ENCODE measurements at regions of chr6 and their contacts with region 1.

Region 1: DNA sequence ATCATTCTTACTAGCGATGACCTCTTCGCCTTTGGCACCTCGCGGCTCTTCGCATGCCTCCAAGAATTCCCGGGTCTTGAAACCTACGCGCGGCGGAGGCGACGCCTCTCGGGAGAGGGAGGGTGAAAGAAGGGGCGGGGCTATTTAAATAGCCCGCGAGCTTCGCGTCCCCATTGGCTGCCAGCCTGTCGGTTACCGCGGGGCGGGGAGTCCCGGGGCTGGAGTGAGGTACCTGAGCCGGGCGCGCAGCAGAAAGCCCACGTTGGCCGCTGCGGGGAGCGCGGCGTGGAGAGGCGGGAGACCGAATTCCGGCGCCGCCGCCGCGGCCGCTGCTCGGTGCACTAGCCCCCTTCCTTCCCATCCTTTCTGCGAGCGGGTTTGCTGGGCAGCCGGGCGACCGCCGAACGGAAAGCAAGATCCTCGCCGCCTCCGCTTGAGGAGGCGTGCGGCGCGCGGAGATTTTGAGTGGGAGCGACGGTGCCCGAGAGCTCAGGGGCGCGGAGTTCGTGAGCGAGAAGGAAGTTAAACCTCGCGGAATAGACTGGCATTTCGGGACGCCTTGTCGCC is at the start of gene BMP6:
- DNase-seq: peak; percentile 27
- H3K4me3 ChIP-seq: peak within 1 kb of the TSS; percentile 53
- H3K27me3 ChIP-seq: peaks cover 19% of the 10 kb centered on the region
- CTCF ChIP-seq: no peak
- polyA plus RNA-seq, gene BMP6: 0.06 and 0.10 TPM in 2 replicates

Region 2: GRCh38 chr6:7389162-7389450 is 336.8 kb before region 1 on chr6:
- CTCF ChIA-PET with region 1: no interaction called
- POLR2A ChIA-PET with region 1: no interaction called
- DNase-seq: no peak
- H3K4me3 ChIP-seq: peak overlapping the region; percentile 77
- H3K27me3 ChIP-seq: no peaks in the 10 kb centered on the region
- CTCF ChIP-seq: no peak

Region 3: DNA sequence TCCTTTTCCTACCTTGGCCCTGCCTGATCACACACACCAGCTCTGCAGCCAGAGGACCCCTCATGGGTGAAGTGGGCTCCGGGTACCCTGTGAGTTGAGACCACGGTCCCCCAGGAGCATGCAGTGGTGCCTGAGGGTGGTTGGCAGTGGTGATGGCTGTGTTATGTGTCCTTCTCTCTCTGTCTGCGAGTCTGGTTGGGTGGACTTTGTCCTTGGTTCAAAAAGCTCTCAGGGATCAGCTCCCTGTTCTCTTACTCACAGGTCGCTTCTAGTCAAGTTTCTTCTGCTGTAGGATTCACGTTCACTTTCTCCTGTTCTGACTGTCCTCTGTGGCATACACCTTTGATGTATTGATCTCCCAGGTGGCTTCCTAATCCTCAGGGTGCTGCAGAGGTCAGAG is 100.1 kb after region 1 on chr6:
- CTCF ChIA-PET with region 1: no interaction called
- POLR2A ChIA-PET with region 1: no interaction called
- DNase-seq: no peak
- H3K4me3 ChIP-seq: no peak overlapping the region
- H3K27me3 ChIP-seq: no peaks in the 10 kb centered on the region
- CTCF ChIP-seq: no peak

Region 4: GRCh38 chr6:7992002-7992815 is 266.3 kb after region 1 on chr6:
- CTCF ChIA-PET with region 1: interaction called, 40 read pairs
- POLR2A ChIA-PET with region 1: no interaction called
- DNase-seq: no peak
- H3K4me3 ChIP-seq: no peak overlapping the region
- H3K27me3 ChIP-seq: no peaks in the 10 kb centered on the region; the same call in 1 of the 2 replicates
- CTCF ChIP-seq: peak; percentile 53

Region 5: DNA sequence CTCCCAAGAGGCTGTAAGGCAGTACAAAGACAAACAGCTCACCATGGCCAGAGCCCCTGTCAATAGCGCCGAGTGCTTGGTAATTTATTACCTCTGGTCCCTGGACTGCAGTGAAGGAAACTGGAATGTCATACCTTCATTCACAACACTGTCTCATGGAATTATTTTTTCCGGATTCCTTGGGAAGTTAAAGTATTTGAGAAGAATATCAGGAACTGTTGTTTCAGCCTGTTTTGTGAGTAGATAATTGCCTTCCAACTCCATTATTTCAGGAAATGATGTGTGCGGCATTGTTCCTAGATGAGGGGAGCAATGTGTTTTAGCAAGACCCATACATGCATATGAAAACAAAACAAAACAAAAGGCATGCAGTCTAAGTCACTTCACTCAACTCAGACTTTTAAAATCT is 274.3 kb after region 1 on chr6:
- CTCF ChIA-PET with region 1: interaction called, 38 read pairs
- POLR2A ChIA-PET with region 1: no interaction called
- DNase-seq: no peak
- H3K4me3 ChIP-seq: no peak overlapping the region
- H3K27me3 ChIP-seq: no peaks in the 10 kb centered on the region
- CTCF ChIP-seq: no peak

Region 6: GRCh38 chr6:8006208-8006607 is 280.3 kb after region 1 on chr6:
- CTCF ChIA-PET with region 1: interaction called, 38 read pairs
- POLR2A ChIA-PET with region 1: no interaction called
- DNase-seq: no peak
- H3K4me3 ChIP-seq: no peak overlapping the region
- H3K27me3 ChIP-seq: no peaks in the 10 kb centered on the region
- CTCF ChIP-seq: peak; percentile 47; the same call in 1 of the 2 replicates

Region 7: GRCh38 chr6:8014947-8015346 is 289.0 kb after region 1 on chr6:
- CTCF ChIA-PET with region 1: interaction called, 20 read pairs
- POLR2A ChIA-PET with region 1: no interaction called
- DNase-seq: no peak
- H3K4me3 ChIP-seq: no peak overlapping the region
- H3K27me3 ChIP-seq: no peaks in the 10 kb centered on the region
- CTCF ChIP-seq: no peak

Region 8: DNA sequence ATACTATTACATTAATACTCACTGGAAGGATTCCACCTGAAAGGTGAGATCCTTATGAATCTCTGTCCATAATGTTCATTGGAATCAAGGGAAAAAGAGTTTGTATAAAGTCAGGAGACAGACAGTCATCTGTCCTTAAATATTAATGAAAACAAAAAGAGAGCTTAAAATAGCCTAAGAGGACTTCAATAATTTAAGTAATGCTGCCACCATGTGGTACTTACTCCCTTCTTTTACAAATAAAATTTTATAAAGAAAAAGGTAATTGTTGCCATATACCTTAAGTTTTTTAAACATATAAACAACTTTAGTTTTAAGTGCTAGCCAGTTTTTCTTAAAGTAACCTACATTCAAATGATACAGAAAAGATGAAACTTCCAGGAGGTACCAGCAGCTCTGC is 333.2 kb after region 1 on chr6:
- CTCF ChIA-PET with region 1: interaction called, 34 read pairs
- POLR2A ChIA-PET with region 1: interaction called, 14 read pairs
- DNase-seq: no peak
- H3K4me3 ChIP-seq: no peak overlapping the region
- H3K27me3 ChIP-seq: no peaks in the 10 kb centered on the region
- CTCF ChIP-seq: peak; percentile 31

Measured in BJ (cell line).